ENCODE measurements at regions of chr7 and their contacts with region 1.

Region 1: GRCh38 chr7:66493235-66494181 is 135.2 kb upstream of the KCTD7 start:
- DNase-seq: peak; percentile 92 to 99 (median 96)
- ATAC-seq: peak; percentile 88 to 95
- H3K4me3 Mint-ChIP-seq: peak overlapping the region; percentile 89 to 96 (median 94)
- H3K27ac Mint-ChIP-seq: peak overlapping the region; percentile 94 to 99 (median 99)
- H3K4me1 Mint-ChIP-seq: peaks cover 7 to 24% (median 16%) of the 10 kb centered on the region in 4 donors
- H3K27me3 Mint-ChIP-seq: no peaks in the 10 kb centered on the region

Region 2: DNA sequence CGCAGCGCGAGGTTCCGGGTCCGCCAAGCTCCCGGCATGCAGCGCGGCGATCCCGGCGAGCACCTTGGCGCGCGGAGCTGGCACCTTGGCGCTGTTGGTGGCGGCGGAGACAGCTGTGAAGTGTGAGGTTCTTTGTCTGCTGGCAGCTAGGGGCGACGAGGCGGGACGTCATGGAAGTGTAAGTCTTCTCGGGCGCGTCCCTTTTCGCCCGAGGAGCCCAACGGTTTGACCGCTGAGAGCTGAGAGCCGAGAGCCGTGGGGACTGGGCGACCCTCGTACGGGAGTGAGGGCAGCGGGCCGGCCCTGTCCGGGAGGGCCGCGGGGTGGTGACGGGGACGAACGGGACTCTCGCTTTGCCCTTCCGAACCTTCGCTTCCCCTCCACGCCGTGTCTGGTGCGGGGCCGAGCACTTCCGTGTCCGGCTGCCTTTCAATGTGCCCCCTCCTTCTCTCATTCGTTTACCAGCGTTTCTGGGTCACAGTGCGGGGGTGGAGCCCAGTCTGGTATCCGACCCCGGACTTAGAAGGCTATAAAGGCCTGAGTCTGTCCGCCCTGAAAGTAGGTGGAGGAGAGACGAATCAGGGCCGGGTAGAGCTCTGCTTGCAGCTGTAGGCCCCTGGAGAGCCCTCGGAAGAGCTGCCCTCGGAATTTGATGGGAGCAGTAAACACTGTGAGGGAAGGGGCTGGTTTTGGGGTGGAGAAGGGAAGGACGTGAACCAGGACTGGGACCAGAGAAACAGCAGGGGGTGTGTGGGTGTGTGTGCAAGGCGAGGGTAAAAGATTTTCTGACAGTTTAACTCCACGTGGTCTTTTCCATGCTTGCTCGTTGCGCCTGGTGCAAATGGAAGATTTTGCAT is 378.5 kb before region 1 on chr7 and contains the start of gene CRCP:
- POLR2A ChIA-PET with region 1: interaction called, 10 read pairs
- DNase-seq: peak; percentile 82 to 89 (median 85)
- ATAC-seq: peak; percentile 94 to 95
- H3K4me3 Mint-ChIP-seq: peak within 1 kb of the TSS; percentile 93 to 99 (median 96)
- H3K27ac Mint-ChIP-seq: peak within 1 kb of the TSS; percentile 91 to 98 (median 96)
- H3K4me1 Mint-ChIP-seq: peaks cover 27 to 52% (median 49%) of the 10 kb centered on the region in 4 donors
- H3K27me3 Mint-ChIP-seq: peaks cover 0 to 2% (median 0%) of the 10 kb centered on the region in 5 donors
- polyA plus RNA-seq, gene CRCP: 29.5 to 37.9 (median 36.1) TPM

Region 3: DNA sequence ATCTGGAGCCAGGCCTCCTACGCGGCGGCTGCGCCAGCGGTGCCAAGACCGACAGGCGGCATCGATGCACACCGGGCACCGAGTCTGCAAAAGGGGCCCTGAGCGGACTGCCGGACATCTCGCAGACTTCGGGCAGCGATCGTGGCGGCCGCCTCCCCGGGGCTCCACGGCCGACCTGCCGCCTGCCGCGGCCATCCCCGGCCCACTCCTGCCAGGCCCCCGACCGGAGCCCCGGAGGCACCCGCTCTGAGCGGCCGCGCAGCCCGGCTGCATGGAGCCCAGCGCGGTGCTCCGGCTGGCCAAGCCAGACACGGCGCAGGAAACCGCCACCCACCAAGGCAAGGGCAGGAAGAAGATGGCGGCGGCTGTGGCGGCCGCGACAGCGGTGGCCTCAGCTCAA is 19.1 kb before region 1 on chr7:
- POLR2A ChIA-PET with region 1: no interaction called
- DNase-seq: no peak
- ATAC-seq: no peak
- H3K4me3 Mint-ChIP-seq: no peak overlapping the region
- H3K27ac Mint-ChIP-seq: no peak overlapping the region
- H3K4me1 Mint-ChIP-seq: no peaks in the 10 kb centered on the region
- H3K27me3 Mint-ChIP-seq: no peaks in the 10 kb centered on the region

Region 4: DNA sequence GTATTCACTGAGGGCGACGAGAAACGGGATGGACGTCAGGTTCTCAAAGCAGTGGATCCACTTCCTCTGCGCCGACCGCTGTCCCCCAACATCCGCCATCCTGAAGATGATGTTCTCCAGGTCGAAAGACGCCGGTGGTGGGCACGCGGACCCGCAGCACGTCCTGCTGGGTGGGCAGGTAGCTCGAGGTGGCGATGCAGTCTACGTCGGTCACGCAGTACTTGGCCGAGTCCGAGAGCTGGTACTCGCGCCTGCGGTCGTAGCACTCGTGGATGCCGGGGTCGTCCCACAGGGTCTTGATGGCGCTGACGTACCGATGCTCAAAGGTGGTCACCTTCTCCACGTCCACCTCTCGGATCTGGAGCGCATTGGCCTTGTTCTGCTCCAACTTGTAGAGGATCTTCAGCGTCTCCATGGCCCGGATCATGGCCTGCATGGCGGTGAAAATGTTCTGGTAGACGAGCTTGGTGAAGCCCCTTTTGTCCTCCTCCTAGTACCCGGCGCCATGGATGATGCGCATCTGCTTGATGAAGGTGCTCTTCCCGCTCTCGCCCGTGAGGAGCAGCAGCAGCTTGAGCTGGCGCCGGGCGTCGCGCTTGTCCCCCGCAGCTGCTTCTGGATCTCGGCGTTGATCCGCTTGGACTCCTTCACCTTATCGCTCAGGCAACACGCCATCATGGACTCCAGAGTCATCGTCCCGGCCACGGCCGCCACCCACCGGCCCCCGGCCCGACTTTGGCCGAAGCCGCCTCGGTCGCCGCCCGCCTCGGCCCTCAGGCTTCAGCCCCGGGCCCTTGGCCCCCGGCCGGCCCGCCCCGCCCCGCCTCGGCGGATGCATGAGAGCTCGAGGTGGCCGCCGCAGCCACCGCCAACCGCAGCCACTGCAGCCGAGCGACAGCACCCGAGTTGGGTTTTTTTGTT is 12.3 kb after region 1 on chr7:
- POLR2A ChIA-PET with region 1: interaction called, 15 read pairs
- DNase-seq: peak in 7 of 10 donors; percentile 22 to 55 (median 39)
- ATAC-seq: peak; percentile 75 to 88
- H3K4me3 Mint-ChIP-seq: peak overlapping the region; percentile 58 to 81 (median 72)
- H3K27ac Mint-ChIP-seq: peak overlapping the region in 6 of 10 donors; percentile 46 to 72 (median 50)
- H3K4me1 Mint-ChIP-seq: peaks cover 0 to 14% (median 7%) of the 10 kb centered on the region in 4 donors
- H3K27me3 Mint-ChIP-seq: peaks cover 0 to 15% (median 5%) of the 10 kb centered on the region in 5 donors

Region 5: GRCh38 chr7:66844552-66845378 is 351.3 kb after region 1 on chr7:
- POLR2A ChIA-PET with region 1: interaction called, 20 read pairs
- DNase-seq: peak; percentile 98 to 100 (median 99)
- ATAC-seq: peak; percentile 89 to 92
- H3K4me3 Mint-ChIP-seq: peak overlapping the region; percentile 91 to 100 (median 99)
- H3K27ac Mint-ChIP-seq: peak overlapping the region; percentile 98 to 100 (median 100)
- H3K4me1 Mint-ChIP-seq: peaks cover 10 to 34% (median 28%) of the 10 kb centered on the region in 4 donors
- H3K27me3 Mint-ChIP-seq: peaks cover 0 to 5% (median 0%) of the 10 kb centered on the region in 5 donors

Region 6: DNA sequence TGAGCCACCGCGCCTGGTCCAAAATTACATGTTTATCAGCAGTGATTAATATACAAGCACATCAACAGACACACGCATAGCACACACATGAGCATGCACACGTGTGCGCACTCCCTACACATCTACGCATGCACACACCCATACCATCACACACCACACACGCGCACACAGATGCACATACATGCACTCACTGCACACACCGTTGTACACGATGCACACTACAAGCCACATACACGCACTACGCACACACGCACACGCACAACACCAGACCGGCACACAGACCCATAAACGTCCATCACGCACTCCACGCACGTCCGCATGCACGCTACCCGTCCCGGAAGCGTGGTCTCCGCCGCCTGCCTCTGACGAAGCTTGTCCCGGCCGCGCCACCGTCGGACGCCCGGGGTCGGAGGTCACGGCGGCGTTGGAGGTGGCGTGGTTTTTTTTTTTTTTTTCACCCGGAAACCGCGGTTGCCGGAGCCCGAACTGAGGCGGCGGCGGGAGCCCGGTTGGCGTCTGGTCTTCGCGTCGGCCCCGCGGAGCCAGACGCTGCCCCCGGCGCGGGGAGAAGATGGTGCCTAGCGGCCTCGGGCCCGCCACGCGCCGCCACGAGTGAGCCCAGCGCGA is 427.4 kb after region 1 on chr7 and contains the start of gene TMEM248:
- POLR2A ChIA-PET with region 1: interaction called, 12 read pairs
- DNase-seq: peak; percentile 83 to 96 (median 92)
- ATAC-seq: peak; percentile 87
- H3K4me3 Mint-ChIP-seq: peak within 1 kb of the TSS; percentile 86 to 100 (median 98)
- H3K27ac Mint-ChIP-seq: peak within 1 kb of the TSS; percentile 84 to 100 (median 98)
- H3K4me1 Mint-ChIP-seq: peaks cover 15 to 47% (median 41%) of the 10 kb centered on the region in 4 donors
- H3K27me3 Mint-ChIP-seq: peaks cover 0 to 3% (median 0%) of the 10 kb centered on the region in 5 donors
- polyA plus RNA-seq, gene TMEM248: 93.5 to 113 (median 103) TPM

Measured in naive thymus-derived CD8-positive, alpha-beta T cell (primary cell).